Head of caudate nucleus (tissue), 42 donors: ENCODE measurements at regions of chr20 and their contacts with region 1.

Region 1: GRCh38 chr20:46307139-46307998 is 929 bp downstream of the CDH22 start:
- DNase-seq: peak; percentile 12 to 78 (median 62)

Region 2: GRCh38 chr20:45946149-45946970 is 361.0 kb before region 1 on chr20:
- intact Hi-C with region 1: no loop called
- DNase-seq: peak in 11 of 42 donors; percentile 20 to 64 (median 44)

Region 3: GRCh38 chr20:46349035-46349741 is 41.8 kb after region 1 on chr20:
- intact Hi-C with region 1: loop called (anchors 2 kb)
- DNase-seq: peak; percentile 43 to 88 (median 76)

Region 4: DNA sequence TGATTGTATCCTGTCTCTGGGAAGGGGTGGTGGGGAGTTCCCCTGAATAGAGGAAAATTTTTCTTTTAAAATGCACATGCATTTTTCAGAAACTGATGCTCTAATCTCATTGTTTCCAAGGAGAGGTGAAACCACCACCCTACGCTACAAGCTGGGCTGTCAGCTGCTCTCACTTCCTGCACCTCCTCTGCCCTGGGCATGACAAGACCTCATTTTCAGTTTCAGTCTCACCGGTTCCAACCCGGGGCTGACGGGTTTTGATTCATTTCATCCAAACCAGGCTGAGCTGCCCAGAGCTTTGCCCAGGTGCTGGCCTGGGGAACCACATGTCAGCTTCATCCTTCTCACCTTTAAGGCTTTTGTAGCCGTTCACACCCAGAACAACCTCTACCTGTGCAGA is 687.0 kb after region 1 on chr20:
- intact Hi-C with region 1: no loop called
- DNase-seq: no peak